Breast epithelium (tissue), 4 donors: ENCODE measurements at regions of chr1 and their contacts with region 1.

Region 1: DNA sequence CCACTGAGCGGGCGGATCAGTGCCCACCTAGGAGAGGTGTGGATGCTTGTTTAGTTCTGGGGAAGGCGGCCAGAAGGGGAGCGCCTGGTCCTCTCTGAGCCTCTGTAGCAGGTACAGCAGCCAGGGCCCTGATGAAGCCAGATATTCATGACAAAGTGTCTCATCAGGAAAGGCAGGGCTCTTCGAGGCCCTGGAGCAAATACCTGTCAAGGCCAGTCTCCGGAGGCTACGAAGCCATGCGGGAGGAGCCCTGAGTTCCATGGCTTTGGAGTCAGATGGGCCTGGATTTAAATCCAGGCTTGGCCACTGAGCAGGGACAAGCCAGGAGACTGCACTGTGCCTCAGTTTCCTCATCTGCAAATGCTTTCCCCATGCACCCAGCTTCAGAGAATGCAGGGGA is 25.4 kb upstream of the GPR153 start:
- DNase-seq: no peak
- H3K4me3 ChIP-seq: no peak overlapping the region
- H3K27ac ChIP-seq: no peak overlapping the region
- H3K4me1 ChIP-seq: no peaks in the 10 kb centered on the region
- H3K27me3 ChIP-seq: no peaks in the 10 kb centered on the region
- CTCF ChIP-seq: no peak
- POLR2A ChIP-seq: no peak

Region 2: GRCh38 chr1:6334261-6334993 is 48.2 kb after region 1 on chr1:
- intact Hi-C with region 1: loop called (anchors 1 kb)
- DNase-seq: no peak
- H3K4me3 ChIP-seq: no peak overlapping the region
- H3K27ac ChIP-seq: no peak overlapping the region
- H3K4me1 ChIP-seq: no peaks in the 10 kb centered on the region
- H3K27me3 ChIP-seq: no peaks in the 10 kb centered on the region
- CTCF ChIP-seq: no peak
- POLR2A ChIP-seq: no peak